Activated B cell treated with CpG ODN at 0.5 μM for 24 hours (primary cell): ENCODE measurements at regions of chr12 and their contacts with region 1.

Region 1: GRCh38 chr12:116277393-116278278 is at the start of gene MED13L:
- DNase-seq: peak; percentile 90
- ATAC-seq: peak; percentile 77
- H3K4me3 Mint-ChIP-seq: peak within 1 kb of the TSS; percentile 92
- H3K27ac Mint-ChIP-seq: peak within 1 kb of the TSS; percentile 90
- H3K4me1 Mint-ChIP-seq: peaks cover 45% of the 10 kb centered on the region
- H3K27me3 Mint-ChIP-seq: no peaks in the 10 kb centered on the region
- CTCF ChIP-seq: no peak
- total RNA-seq, gene MED13L: 164 and 183 TPM in 2 replicates

Region 2: DNA sequence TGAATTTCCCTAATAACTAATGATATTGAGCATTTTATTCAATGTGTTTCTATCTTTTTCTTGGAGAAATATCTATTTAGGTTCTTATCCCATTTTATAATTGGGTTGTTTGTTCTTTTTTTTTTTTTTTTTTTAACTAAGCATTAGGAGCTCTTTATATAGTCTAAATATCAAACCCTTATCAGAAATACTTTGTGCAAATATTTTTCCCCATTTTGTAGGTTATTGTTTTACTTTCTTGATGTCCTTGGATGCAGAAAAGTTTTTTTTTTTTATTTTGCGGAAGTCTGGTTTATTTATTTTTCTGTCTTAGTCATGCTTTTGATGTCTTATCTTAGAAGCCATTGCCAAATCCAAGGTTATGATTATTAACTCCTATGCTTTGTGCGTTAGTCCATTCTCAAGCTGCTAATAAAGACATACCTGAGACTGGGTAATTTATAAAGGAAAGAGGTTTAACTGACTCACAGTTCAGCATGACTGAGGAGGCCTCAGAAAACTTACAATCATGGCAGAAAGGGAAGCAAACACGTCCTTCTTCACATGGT is 1159.4 kb before region 1 on chr12:
- CTCF ChIA-PET with region 1: no interaction called
- POLR2A ChIA-PET with region 1: no interaction called
- intact Hi-C with region 1: no loop called
- DNase-seq: no peak
- ATAC-seq: no peak
- H3K4me3 Mint-ChIP-seq: no peak overlapping the region
- H3K27ac Mint-ChIP-seq: no peak overlapping the region
- H3K4me1 Mint-ChIP-seq: no peaks in the 10 kb centered on the region
- H3K27me3 Mint-ChIP-seq: no peaks in the 10 kb centered on the region
- CTCF ChIP-seq: no peak

Region 3: DNA sequence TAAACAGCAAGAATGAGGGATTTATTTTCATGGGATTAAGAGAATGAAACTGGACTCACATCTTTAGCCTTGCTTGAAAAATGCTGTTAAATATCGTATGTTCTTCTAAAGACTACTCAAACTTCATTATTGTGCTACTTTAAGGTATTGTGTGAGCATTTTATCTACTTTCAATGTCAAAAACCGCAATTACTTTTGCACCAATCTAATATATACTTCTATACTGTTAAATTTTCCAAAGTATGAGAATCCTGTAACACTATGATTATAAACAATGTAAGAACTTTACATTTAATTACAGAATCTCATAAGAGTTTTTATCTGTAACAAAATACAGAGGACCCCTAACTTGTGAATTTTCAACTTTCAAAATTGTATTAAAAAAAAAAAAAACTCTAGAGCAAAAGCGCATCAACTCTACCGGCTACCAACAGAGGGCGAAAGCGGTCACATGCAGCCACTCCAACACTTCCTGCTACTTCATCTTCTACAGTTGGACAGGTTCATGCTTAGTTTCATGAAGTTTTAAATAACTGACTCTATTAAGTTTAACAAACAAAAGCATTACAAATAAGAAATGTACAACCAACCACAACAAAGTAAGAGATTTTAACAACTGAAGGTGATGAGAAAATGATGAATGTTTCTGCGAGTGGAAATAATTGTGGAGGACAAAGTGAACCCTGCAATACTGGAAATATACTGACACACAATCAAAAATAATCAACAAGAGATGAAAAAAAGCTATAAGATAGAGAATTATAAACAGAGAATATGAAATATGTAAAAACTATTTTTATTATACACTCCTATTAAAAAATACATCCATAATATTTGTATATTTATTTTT is 211.0 kb before region 1 on chr12:
- CTCF ChIA-PET with region 1: no interaction called
- POLR2A ChIA-PET with region 1: no interaction called
- intact Hi-C with region 1: loop called (anchors 2 kb)
- DNase-seq: peak; percentile 34
- ATAC-seq: peak; percentile 71
- H3K4me3 Mint-ChIP-seq: no peak overlapping the region
- H3K27ac Mint-ChIP-seq: peak overlapping the region; percentile 60
- H3K4me1 Mint-ChIP-seq: peaks cover 44% of the 10 kb centered on the region
- H3K27me3 Mint-ChIP-seq: no peaks in the 10 kb centered on the region
- CTCF ChIP-seq: peak; percentile 96

Region 4: GRCh38 chr12:116159175-116159574 is 118.5 kb before region 1 on chr12:
- CTCF ChIA-PET with region 1: no interaction called
- POLR2A ChIA-PET with region 1: no interaction called
- intact Hi-C with region 1: no loop called
- DNase-seq: no peak
- ATAC-seq: no peak
- H3K4me3 Mint-ChIP-seq: no peak overlapping the region
- H3K27ac Mint-ChIP-seq: no peak overlapping the region
- H3K4me1 Mint-ChIP-seq: peaks cover 48% of the 10 kb centered on the region
- H3K27me3 Mint-ChIP-seq: no peaks in the 10 kb centered on the region
- CTCF ChIP-seq: no peak

Region 5: GRCh38 chr12:116236148-116236731 is 41.4 kb before region 1 on chr12:
- CTCF ChIA-PET with region 1: no interaction called
- POLR2A ChIA-PET with region 1: no interaction called
- intact Hi-C with region 1: loop called (anchors 2 kb)
- DNase-seq: no peak
- ATAC-seq: peak; percentile 65
- H3K4me3 Mint-ChIP-seq: no peak overlapping the region
- H3K27ac Mint-ChIP-seq: peak overlapping the region; percentile 67
- H3K4me1 Mint-ChIP-seq: peaks cover 44% of the 10 kb centered on the region
- H3K27me3 Mint-ChIP-seq: no peaks in the 10 kb centered on the region
- CTCF ChIP-seq: peak; percentile 40

Region 6: DNA sequence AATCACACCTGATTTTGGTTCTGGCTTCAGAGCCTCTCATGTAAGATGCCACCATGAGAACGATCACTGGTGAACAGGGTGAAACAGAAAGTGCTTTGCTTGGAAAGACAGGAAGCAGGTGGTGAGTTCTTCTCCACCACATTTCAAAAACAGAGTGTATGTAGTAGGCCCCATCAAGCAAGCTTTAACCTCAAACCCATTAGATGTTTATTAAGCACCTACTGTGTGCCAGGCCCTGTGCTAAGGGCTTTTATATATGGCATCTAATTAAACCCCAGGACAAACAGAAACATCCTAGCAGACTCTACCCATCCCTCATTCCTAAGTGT is 47.7 kb after region 1 on chr12:
- CTCF ChIA-PET with region 1: no interaction called
- POLR2A ChIA-PET with region 1: interaction called, 6 read pairs
- intact Hi-C with region 1: loop called (anchors 2 kb)
- DNase-seq: no peak
- ATAC-seq: peak; percentile 82
- H3K4me3 Mint-ChIP-seq: no peak overlapping the region
- H3K27ac Mint-ChIP-seq: peak overlapping the region; percentile 87
- H3K4me1 Mint-ChIP-seq: peaks cover 30% of the 10 kb centered on the region
- H3K27me3 Mint-ChIP-seq: no peaks in the 10 kb centered on the region
- CTCF ChIP-seq: no peak

Region 7: GRCh38 chr12:116539905-116540482 is 262.4 kb after region 1 on chr12:
- CTCF ChIA-PET with region 1: no interaction called
- POLR2A ChIA-PET with region 1: interaction called, 3 read pairs
- intact Hi-C with region 1: loop called (anchors 1 kb)
- DNase-seq: no peak
- ATAC-seq: no peak
- H3K4me3 Mint-ChIP-seq: no peak overlapping the region
- H3K27ac Mint-ChIP-seq: peak overlapping the region; percentile 19
- H3K4me1 Mint-ChIP-seq: peaks cover 52% of the 10 kb centered on the region
- H3K27me3 Mint-ChIP-seq: no peaks in the 10 kb centered on the region
- CTCF ChIP-seq: no peak

Region 8: GRCh38 chr12:116687888-116688287 is 410.3 kb after region 1 on chr12:
- CTCF ChIA-PET with region 1: no interaction called
- POLR2A ChIA-PET with region 1: interaction called, 4 read pairs
- intact Hi-C with region 1: loop called (anchors 2 kb)
- DNase-seq: peak; percentile 44
- ATAC-seq: peak; percentile 94
- H3K4me3 Mint-ChIP-seq: no peak overlapping the region
- H3K27ac Mint-ChIP-seq: no peak overlapping the region
- H3K4me1 Mint-ChIP-seq: peaks cover 25% of the 10 kb centered on the region
- H3K27me3 Mint-ChIP-seq: peaks cover 9% of the 10 kb centered on the region
- CTCF ChIP-seq: no peak